Cardiac septum (tissue), 1 donor: ENCODE measurements at regions of chr1 and their contacts with region 1.

Region 1: GRCh38 chr1:158506369-158506987 is 34.5 kb downstream of the OR10R2 start:
- DNase-seq: no peak

Region 2: DNA sequence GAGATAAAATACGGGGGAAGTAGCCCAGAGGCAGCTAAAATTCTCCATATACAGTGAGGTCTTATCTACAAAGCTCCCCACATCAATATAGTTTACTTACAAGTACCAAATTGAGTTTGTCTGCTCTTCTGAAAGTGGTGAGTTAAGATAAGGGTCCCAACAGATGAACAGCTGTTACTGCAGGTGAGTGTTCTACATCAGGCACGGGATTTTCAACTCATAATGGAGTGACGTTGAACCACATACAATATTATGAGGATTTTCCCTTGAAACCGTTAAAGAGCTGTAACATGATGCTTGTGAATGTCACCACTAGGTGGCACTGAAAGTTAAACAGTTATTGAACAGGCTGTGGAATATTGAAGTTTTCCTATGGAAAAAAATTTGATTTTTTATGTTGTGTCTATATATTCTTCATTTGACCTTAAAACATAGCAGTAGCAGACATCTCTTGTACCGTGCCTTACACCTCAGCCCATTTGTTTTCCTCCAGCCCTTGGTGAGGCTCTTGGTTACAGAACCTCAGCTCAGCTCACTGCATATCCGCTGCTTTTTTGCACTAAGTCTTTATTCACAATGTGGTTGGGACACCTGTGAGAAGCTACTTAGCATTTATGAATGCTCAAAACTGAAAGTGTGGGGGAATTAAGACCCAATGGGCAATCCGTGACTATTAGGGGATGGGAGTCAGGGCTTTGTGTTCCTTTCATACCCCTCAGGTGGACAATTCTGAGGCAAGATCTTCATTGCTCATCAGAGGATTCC is 302.6 kb before region 1 on chr1:
- intact Hi-C with region 1: loop called (anchors 10 kb)
- DNase-seq: no peak